ENCODE measurements at regions of chr3 and their contacts with region 1.

Region 1: GRCh38 chr3:151156618-151157216 is 46.3 kb downstream of the GPR171 start:
- DNase-seq: peak; percentile 77 to 88 (median 86)
- H3K4me3 ChIP-seq: no peak overlapping the region
- H3K27ac ChIP-seq: no peak overlapping the region
- H3K4me1 ChIP-seq: peaks cover 0 to 10% (median 1%) of the 10 kb centered on the region in 4 experiments
- H3K27me3 ChIP-seq: no peaks in the 10 kb centered on the region

Region 2: DNA sequence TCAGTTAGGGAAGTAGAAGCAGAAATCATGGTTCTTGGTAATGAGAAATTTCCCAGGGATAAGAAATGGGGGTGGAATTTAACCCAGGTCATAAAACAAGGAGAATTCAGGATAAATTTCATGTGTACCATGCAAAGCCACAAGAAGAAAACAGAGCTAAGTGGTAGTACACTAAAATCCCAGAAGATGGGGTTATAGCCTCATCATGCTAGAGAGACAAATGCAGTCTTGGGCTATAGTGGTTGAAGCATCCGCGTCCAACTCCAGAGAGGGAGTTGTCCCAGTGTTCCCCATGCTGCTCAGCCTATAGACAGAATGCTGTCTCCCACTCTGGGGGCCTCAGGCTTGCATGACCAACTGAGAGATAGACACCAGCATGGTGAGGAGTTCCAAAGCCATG is 148.0 kb before region 1 on chr3:
- CTCF ChIA-PET with region 1: interaction called, 16 read pairs
- POLR2A ChIA-PET with region 1: no interaction called
- DNase-seq: peak; percentile 61 to 71 (median 62)
- H3K4me3 ChIP-seq: no peak overlapping the region
- H3K27ac ChIP-seq: no peak overlapping the region
- H3K4me1 ChIP-seq: peaks cover 0 to 2% (median 0%) of the 10 kb centered on the region in 4 experiments
- H3K27me3 ChIP-seq: no peaks in the 10 kb centered on the region

Region 3: DNA sequence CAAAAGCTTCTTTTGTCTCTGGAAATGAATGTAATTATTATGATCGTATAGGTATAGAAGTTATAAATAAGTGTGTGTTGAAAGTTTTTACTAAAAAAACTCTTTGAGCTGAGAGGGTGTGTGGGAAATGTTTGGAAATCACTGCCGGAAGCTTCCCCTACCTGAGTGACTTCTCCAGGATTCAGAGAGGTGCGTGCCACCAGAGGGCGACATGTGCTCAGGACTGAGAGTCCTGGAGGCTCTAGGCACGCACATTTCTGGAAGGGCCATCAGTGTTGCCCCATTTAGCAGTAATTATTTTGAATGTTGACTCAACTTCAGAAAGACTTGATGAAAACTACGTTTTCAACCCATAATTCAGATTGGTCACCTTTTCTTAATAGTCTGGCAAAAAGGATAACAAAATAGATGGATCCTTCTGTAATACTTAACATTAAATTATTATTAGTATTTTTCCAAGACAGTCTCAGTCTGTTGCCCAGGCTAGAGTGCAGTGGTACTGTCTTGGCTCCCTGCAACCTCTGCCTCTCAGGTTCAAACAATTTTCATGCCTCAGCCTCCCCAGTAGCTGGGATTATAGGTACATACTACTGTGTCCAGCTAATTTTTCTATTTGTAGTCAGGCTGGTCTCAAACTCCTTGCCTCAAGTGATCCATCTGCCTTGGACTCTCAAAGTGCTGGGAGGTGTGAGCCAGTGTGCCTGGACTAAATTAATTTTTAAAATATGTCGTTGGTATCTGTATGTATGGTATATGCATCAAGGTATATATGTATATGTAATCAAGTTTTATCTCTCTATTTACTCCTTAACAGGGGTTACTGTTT is 11.8 kb after region 1 on chr3:
- CTCF ChIA-PET with region 1: interaction called, 13 read pairs
- POLR2A ChIA-PET with region 1: no interaction called
- DNase-seq: peak in 2 of 3 donors; percentile 60 to 63
- H3K4me3 ChIP-seq: no peak overlapping the region
- H3K27ac ChIP-seq: no peak overlapping the region
- H3K4me1 ChIP-seq: peaks cover 34 to 51% (median 45%) of the 10 kb centered on the region in 4 experiments
- H3K27me3 ChIP-seq: no peaks in the 10 kb centered on the region

Region 4: DNA sequence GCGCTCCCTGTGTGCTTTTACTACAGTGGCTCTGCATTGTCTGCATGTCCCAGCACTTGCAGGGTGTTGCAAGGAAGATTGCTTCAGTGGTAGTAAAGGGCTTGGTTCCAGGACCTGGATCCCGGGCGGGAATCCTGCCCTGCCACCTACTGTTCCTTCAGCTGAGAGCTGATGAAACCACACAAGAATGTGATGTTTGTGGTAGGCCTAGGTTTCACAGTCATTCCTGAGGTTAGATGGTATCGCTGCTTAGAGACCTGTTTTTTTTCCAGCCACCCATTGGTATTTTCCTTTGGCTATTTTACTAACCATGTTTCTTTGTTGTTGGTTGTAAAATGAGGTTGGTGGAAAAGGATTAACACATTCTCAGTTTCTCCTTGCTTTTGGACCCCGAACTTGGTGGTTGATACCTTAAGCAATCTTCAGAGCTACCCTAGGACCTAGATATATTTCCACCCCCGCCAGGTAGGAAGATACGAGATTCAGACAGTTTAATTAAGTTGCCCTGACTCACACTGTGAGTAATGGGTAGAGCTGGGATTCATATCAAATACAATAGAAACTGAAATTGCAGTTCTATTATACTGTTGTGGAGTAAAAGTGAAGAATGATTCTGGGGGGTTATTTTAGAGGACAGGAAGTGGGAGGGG is 148.5 kb after region 1 on chr3:
- CTCF ChIA-PET with region 1: no interaction called
- POLR2A ChIA-PET with region 1: no interaction called
- DNase-seq: no peak
- H3K4me3 ChIP-seq: no peak overlapping the region
- H3K27ac ChIP-seq: no peak overlapping the region
- H3K4me1 ChIP-seq: peaks cover 0 to 3% (median 0%) of the 10 kb centered on the region in 4 experiments
- H3K27me3 ChIP-seq: no peaks in the 10 kb centered on the region

Measured in common myeloid progenitor, CD34-positive (primary cell).